Activated naive CD4-positive, alpha-beta T cell treated with anti-CD3 and anti-CD28 coated beads for 36 hours (primary cell): ENCODE measurements at regions of chr4 and their contacts with region 1.

Region 1: GRCh38 chr4:139083956-139084803 is 68.6 kb downstream of the NOCT start:
- DNase-seq: peak; percentile 90
- H3K4me3 Mint-ChIP-seq: peak overlapping the region; percentile 99
- H3K27ac Mint-ChIP-seq: peak overlapping the region; percentile 99
- H3K4me1 Mint-ChIP-seq: peaks cover 30% of the 10 kb centered on the region
- H3K27me3 Mint-ChIP-seq: no peaks in the 10 kb centered on the region

Region 2: GRCh38 chr4:138242076-138242833 is 841.9 kb before region 1 on chr4 and contains the start of gene SLC7A11:
- CTCF ChIA-PET with region 1: no interaction called
- intact Hi-C with region 1: loop called (anchors 5 kb)
- DNase-seq: peak; percentile 77
- H3K4me3 Mint-ChIP-seq: peak within 1 kb of the TSS; percentile 85
- H3K27ac Mint-ChIP-seq: peak within 1 kb of the TSS; percentile 92
- H3K4me1 Mint-ChIP-seq: peaks cover 11% of the 10 kb centered on the region
- H3K27me3 Mint-ChIP-seq: no peaks in the 10 kb centered on the region
- total RNA-seq, gene SLC7A11: 3.2 to 3.4 TPM

Region 3: DNA sequence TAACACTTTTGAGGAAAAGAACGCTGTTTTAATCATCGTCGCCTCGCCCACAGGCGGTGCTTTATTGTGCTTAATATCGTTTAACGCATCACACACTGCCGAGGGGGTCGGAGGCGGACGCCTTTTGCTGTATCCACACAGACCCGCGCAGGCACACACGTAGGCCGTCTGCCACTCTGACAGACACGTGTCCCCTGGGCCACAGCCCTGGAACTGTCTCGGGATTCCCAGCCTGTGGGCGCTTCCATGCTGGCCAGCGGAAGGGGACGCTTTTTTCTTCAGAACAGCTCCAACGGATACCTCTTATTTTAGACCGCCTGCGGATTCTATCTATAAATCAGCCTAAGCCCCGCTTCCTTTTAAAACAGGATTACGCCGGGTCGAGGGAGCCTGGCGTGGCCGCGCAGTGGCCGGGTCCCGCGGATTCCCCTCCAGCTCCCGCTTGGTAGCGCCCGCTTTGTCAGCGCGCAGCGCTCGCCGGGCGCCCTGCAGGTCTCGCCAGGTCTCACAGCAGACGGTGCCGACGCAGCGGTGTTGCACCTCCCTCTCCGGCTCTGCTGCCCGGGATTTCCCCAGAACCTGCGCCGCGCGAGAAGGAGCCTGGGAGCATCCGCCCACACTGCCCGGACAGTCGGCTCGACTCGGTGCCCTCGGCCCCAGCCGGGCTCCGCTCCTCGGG is 68.8 kb before region 1 on chr4 and contains the start of gene NOCT:
- CTCF ChIA-PET with region 1: interaction called, 4 read pairs
- intact Hi-C with region 1: loop called (anchors 1 kb)
- DNase-seq: peak; percentile 97
- H3K4me3 Mint-ChIP-seq: peak within 1 kb of the TSS; percentile 91
- H3K27ac Mint-ChIP-seq: peak within 1 kb of the TSS; percentile 96
- H3K4me1 Mint-ChIP-seq: peaks cover 48% of the 10 kb centered on the region
- H3K27me3 Mint-ChIP-seq: no peaks in the 10 kb centered on the region
- total RNA-seq, gene NOCT: 9.3 to 10.4 TPM

Region 4: GRCh38 chr4:139295206-139295941 is 211.2 kb after region 1 on chr4:
- CTCF ChIA-PET with region 1: interaction called, 3 read pairs
- intact Hi-C with region 1: loop called (anchors 1 kb)
- DNase-seq: peak; percentile 99
- H3K4me3 Mint-ChIP-seq: peak overlapping the region; percentile 90
- H3K27ac Mint-ChIP-seq: peak overlapping the region; percentile 97
- H3K4me1 Mint-ChIP-seq: peaks cover 42% of the 10 kb centered on the region
- H3K27me3 Mint-ChIP-seq: no peaks in the 10 kb centered on the region

Region 5: DNA sequence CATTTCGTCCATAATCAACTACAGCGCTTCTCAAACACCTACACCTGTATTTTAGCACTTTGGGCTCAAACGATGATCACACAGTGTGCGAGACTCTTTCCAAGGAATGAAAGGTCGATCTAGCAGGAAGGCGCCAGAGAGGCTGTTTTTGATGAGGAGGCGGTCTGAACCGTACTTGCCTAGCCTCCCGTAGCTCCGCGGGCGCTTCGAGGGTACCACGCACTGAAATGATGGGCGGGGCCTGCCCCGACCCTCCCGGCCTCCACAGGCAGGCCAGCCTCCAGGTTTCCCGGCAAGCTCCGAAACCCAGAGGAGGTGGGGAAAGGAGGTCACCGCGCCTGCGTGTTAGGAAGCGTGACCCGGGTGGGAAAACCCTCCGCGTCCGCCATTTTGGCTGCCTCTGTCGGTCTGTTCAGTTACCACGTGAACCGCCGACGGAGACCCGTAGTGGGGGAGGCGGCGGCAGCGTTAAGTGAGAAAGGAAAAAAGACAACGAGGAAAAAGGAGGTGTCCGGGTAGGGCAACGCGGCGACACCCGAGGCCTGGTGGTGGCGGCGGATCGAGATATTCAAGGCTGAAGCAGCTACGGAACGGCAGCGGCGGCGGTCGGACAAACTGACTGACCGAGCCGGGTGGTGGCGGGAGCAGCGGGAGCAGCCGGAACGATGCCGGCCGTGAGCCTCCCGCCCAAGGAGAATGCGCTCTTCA is 217.1 kb after region 1 on chr4 and contains the start of gene NAA15:
- CTCF ChIA-PET with region 1: no interaction called
- intact Hi-C with region 1: loop called (anchors 1 kb)
- DNase-seq: peak; percentile 98
- H3K4me3 Mint-ChIP-seq: peak within 1 kb of the TSS; percentile 100
- H3K27ac Mint-ChIP-seq: peak within 1 kb of the TSS; percentile 98
- H3K4me1 Mint-ChIP-seq: peaks cover 56% of the 10 kb centered on the region
- H3K27me3 Mint-ChIP-seq: no peaks in the 10 kb centered on the region
- total RNA-seq, gene NAA15: 91.5 to 94.0 TPM

Region 6: GRCh38 chr4:139453371-139454110 is 369.4 kb after region 1 on chr4:
- CTCF ChIA-PET with region 1: no interaction called
- intact Hi-C with region 1: loop called (anchors 1 kb)
- DNase-seq: peak; percentile 98
- H3K4me3 Mint-ChIP-seq: peak overlapping the region; percentile 97
- H3K27ac Mint-ChIP-seq: peak overlapping the region; percentile 98
- H3K4me1 Mint-ChIP-seq: peaks cover 50% of the 10 kb centered on the region
- H3K27me3 Mint-ChIP-seq: no peaks in the 10 kb centered on the region